ENCODE measurements at regions of chr4 and their contacts with region 1.

Region 1: DNA sequence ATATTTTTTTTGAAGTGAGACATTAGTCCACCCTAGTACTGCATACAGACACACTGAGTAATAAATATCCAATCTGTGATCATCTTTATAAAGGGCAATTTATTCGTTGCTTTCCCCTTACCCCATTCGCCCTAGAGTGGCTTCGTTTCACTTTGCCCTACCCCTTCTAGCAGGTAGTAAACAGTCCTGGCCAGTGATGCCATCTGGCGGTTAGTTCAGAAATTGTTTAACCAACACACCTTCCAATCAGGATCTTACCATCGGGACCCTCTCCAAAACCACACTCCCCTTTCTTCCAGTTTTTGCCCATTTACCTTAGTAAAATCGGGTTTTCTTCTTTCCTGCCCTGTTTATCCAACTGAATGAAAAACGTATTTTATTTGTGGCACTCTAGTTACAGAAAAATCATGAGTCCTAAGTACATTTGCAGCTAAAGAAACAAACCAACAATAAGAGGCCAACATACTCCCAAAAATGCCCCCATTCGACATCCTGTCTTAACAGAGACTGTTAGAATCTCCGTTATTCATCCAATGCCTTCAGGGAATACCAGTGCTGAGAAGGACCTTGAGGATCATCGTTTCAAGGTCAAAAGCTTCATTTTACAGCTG is 2.2 kb downstream of the PPA2 start:
- DNase-seq: peak; percentile 73
- H3K4me3 ChIP-seq: peak overlapping the region; percentile 84 to 90
- H3K27ac ChIP-seq: peak overlapping the region in 1 of 2 experiments; percentile 92; a peak in 2 of 4 replicates
- H3K4me1 ChIP-seq: peaks cover 8 to 20% of the 10 kb centered on the region in 2 experiments; a peak in 3 of 4 replicates
- H3K27me3 ChIP-seq: no peaks in the 10 kb centered on the region
- CTCF ChIP-seq: peak; percentile 77
- EP300 ChIP-seq: no peak
- RAD21 ChIP-seq: peak; percentile 87

Region 2: DNA sequence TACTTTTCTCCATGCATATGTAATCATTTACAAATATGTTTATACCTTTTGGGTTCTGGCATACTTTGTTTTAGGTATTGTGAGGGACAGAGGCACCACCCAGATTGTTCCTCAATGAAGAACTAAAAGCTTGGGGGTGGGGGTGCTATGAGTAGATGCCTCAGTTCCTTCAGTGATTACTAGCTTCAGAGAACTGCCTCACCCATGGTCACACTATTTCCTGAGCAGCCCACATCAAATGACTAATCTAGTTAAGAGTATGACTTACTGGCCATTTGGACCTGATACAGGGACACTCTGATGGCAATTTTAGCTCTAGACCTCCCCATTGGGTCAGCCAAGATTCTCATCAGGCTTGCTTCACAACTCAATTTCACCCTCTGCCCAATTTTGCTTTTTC is 954.8 kb before region 1 on chr4:
- CTCF ChIA-PET with region 1: no interaction called
- POLR2A ChIA-PET with region 1: no interaction called
- DNase-seq: no peak
- H3K4me3 ChIP-seq: no peak overlapping the region
- H3K27ac ChIP-seq: no peak overlapping the region
- H3K4me1 ChIP-seq: no peaks in the 10 kb centered on the region; a peak in 1 of 4 replicates
- H3K27me3 ChIP-seq: no peaks in the 10 kb centered on the region
- CTCF ChIP-seq: no peak
- EP300 ChIP-seq: no peak
- RAD21 ChIP-seq: no peak

Region 3: GRCh38 chr4:105140684-105141490 is 330.8 kb before region 1 on chr4:
- CTCF ChIA-PET with region 1: interaction called, 39 read pairs
- POLR2A ChIA-PET with region 1: interaction called, 5 read pairs
- DNase-seq: peak; percentile 55
- H3K4me3 ChIP-seq: no peak overlapping the region; a peak in 1 of 4 replicates
- H3K27ac ChIP-seq: 0 out of 4 replicates have a peak overlapping the region, but pooled peaks of 1 of the 2 experiments have one; percentile 49
- H3K4me1 ChIP-seq: 0 out of 4 replicates have a peak, but pooled peaks cover 0 to 8% of the 10 kb centered on the region in 2 experiments
- H3K27me3 ChIP-seq: no peaks in the 10 kb centered on the region
- CTCF ChIP-seq: peak; percentile 78
- EP300 ChIP-seq: no peak
- RAD21 ChIP-seq: peak; percentile 90

Region 4: GRCh38 chr4:105146276-105147015 is 325.2 kb before region 1 on chr4 and contains the start of gene TET2:
- CTCF ChIA-PET with region 1: interaction called, 39 read pairs
- POLR2A ChIA-PET with region 1: interaction called, 16 read pairs
- DNase-seq: peak; percentile 87
- H3K4me3 ChIP-seq: peak within 1 kb of the TSS; percentile 94 to 95
- H3K27ac ChIP-seq: peak within 1 kb of the TSS; percentile 91 to 97
- H3K4me1 ChIP-seq: peaks cover 0 to 5% of the 10 kb centered on the region in 2 experiments; a peak in 2 of 4 replicates
- H3K27me3 ChIP-seq: no peaks in the 10 kb centered on the region
- CTCF ChIP-seq: no peak
- EP300 ChIP-seq: 0 out of 4 replicates have a peak, but pooled peaks of 1 of the 2 experiments have one; percentile 6
- RAD21 ChIP-seq: no peak
- polyA plus RNA-seq, gene TET2: 3.5 and 5.1 TPM in 2 replicates

Region 5: DNA sequence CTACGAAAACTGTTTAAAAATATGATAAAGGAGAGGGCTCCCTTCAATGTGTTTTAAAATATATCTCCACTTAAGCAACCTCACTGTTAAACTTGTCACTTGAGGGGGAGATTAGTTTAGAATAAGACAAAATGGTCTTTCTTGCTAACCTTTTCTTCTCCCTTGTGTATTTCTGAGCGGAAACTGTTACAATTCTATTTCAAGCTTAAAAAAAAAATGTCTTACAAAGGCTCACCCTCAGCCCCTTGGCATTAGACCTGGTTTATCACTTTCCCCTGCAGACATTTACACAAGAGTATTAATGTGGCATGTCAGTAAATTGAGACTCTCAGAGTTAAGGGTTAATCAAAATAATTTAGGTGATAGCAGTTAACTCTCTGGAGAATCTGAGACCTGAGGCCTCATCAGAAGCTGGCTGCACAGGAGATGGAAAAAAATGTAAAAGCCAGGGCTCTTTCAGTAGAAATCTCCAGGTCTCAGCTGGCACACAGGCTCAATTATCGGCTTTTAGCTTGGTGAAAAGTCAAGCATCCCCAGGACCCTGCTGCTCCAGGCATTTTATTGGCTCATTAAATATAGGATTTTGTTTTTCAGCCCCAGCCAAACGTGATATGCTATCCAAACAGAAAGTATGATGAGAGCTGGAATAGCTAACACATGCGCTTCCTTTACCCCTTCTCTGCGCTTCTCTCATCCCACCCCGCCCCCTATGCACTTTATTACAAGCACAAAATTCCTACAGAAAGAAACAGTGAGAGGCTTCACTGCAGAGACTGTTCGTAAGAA is 128.3 kb before region 1 on chr4:
- CTCF ChIA-PET with region 1: interaction called, 10 read pairs
- POLR2A ChIA-PET with region 1: no interaction called
- DNase-seq: peak; percentile 39
- H3K4me3 ChIP-seq: peak overlapping the region; percentile 24 to 37; a peak in 2 of 4 replicates
- H3K27ac ChIP-seq: peak overlapping the region; percentile 5 to 72; a peak in 3 of 4 replicates
- H3K4me1 ChIP-seq: peaks cover 0 to 7% of the 10 kb centered on the region in 2 experiments; a peak in 2 of 4 replicates
- H3K27me3 ChIP-seq: no peaks in the 10 kb centered on the region
- CTCF ChIP-seq: no peak
- EP300 ChIP-seq: no peak
- RAD21 ChIP-seq: no peak; the same call in 1 of the 2 replicates

Region 6: GRCh38 chr4:105483840-105484239 is 12.2 kb after region 1 on chr4:
- CTCF ChIA-PET with region 1: interaction called, 15 read pairs
- POLR2A ChIA-PET with region 1: no interaction called
- DNase-seq: no peak
- H3K4me3 ChIP-seq: no peak overlapping the region
- H3K27ac ChIP-seq: no peak overlapping the region
- H3K4me1 ChIP-seq: no peaks in the 10 kb centered on the region; a peak in 1 of 4 replicates
- H3K27me3 ChIP-seq: no peaks in the 10 kb centered on the region
- CTCF ChIP-seq: no peak
- EP300 ChIP-seq: no peak
- RAD21 ChIP-seq: no peak